WTC11 (cell line): ENCODE measurements at regions of chr11 and their contacts with region 1.

Region 1: DNA sequence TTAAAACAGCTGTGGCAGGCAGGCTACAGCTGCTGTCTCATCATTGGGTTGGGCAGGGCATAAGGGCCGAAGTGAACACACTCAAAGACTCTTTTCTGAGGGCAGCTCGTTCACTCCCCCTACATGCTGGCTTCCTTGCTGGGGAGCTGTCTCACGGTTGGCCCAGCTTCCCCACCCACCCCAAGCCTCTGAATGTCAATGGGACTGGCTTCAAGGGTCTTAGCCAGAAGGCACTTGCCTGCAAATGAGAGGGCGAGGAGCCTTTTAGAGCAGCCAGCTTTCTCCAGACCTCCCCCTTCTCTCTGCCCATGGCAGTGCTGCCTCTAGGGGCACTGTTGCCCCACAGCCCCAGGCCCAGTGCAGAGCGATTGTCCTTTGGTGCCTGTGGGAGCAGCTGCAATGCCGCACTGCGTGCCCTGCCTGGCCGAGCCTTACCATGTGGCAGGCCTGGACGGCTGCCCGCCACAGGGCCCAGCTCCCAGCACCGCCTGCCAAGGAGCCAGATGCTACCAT is 94.7 kb upstream of the RASSF10 start:
- DNase-seq: peak; percentile 88
- ATAC-seq: peak; percentile 98
- H3K4me3 Mint-ChIP-seq: peak overlapping the region; percentile 55
- H3K27ac Mint-ChIP-seq: peak overlapping the region; percentile 99
- H3K4me1 Mint-ChIP-seq: peaks cover 59% of the 10 kb centered on the region
- H3K27me3 Mint-ChIP-seq: no peaks in the 10 kb centered on the region
- CTCF ChIP-seq: peak; percentile 62

Region 2: DNA sequence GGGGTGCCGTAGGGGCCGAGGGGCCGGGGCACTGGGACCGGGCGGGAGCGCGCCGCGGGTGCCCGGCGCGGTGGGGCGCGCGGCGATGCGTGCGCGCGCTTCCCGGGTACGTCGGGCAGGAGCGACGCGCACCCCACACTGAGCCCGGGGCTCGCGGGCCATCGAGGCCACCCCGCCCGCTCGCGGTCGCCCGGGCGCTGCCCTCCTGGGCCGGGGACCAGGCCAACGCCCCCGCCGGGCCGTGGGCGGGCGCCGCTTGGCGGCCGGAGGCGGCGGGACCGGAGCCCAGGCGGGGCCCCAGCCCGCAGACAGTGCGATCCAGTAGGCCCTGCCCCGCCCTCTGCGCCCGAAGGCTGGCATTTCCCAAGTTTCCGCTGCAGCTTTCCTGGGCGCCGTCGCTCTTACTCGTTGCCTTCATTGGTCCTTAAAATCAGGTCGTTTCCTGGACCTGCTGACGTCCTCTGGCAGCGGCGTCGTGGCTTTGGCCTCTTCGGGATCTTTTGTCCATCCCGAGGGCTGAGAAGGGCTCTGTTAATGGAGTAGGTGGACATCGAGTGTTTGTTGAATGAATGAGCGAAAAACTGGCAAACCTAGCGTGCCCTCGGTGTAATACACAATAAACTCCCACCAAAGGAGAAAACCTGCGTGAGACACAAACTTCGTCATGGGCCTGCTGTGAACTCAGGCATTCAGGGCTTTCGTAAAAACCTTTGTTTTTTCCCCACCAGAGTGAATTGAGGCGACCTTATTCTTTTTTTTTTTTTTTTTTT is 536.4 kb before region 1 on chr11:
- CTCF ChIA-PET with region 1: interaction called, 12 read pairs
- POLR2A ChIA-PET with region 1: no interaction called
- DNase-seq: peak; percentile 82
- ATAC-seq: peak; percentile 82
- H3K4me3 Mint-ChIP-seq: peak overlapping the region; percentile 94
- H3K27ac Mint-ChIP-seq: peak overlapping the region; percentile 100
- H3K4me1 Mint-ChIP-seq: peaks cover 23% of the 10 kb centered on the region
- H3K27me3 Mint-ChIP-seq: peaks cover 29% of the 10 kb centered on the region
- CTCF ChIP-seq: no peak

Region 3: GRCh38 chr11:12876340-12876739 is 38.1 kb before region 1 on chr11:
- CTCF ChIA-PET with region 1: interaction called, 10 read pairs
- POLR2A ChIA-PET with region 1: no interaction called
- DNase-seq: no peak
- ATAC-seq: no peak
- H3K4me3 Mint-ChIP-seq: no peak overlapping the region
- H3K27ac Mint-ChIP-seq: no peak overlapping the region
- H3K4me1 Mint-ChIP-seq: peaks cover 40% of the 10 kb centered on the region
- H3K27me3 Mint-ChIP-seq: no peaks in the 10 kb centered on the region
- CTCF ChIP-seq: no peak

Region 4: GRCh38 chr11:12900496-12900895 is 14.0 kb before region 1 on chr11:
- CTCF ChIA-PET with region 1: interaction called, 43 read pairs
- POLR2A ChIA-PET with region 1: interaction called, 5 read pairs
- DNase-seq: no peak
- ATAC-seq: no peak
- H3K4me3 Mint-ChIP-seq: no peak overlapping the region
- H3K27ac Mint-ChIP-seq: no peak overlapping the region
- H3K4me1 Mint-ChIP-seq: peaks cover 17% of the 10 kb centered on the region
- H3K27me3 Mint-ChIP-seq: no peaks in the 10 kb centered on the region
- CTCF ChIP-seq: no peak

Region 5: DNA sequence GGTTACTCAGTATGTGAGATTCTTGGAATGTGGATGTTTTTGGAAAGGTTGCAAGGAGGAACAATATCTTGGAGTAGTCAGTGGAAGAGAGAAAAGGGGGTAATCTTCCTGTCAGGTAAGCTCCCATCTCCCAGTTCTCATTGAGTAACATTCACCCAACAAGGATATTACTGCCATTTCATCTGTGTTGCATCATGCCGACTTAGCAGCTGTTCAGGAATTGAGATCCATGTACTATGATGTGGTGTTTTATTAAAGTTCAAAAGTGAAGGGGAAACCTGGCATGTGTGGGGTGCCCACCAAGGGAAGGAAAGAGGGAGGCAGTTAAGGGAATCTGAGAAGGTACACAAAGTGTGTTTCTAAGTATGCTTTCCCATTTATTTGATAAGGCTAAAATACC is 36.2 kb after region 1 on chr11:
- CTCF ChIA-PET with region 1: interaction called, 15 read pairs
- POLR2A ChIA-PET with region 1: no interaction called
- DNase-seq: no peak
- ATAC-seq: no peak
- H3K4me3 Mint-ChIP-seq: no peak overlapping the region
- H3K27ac Mint-ChIP-seq: no peak overlapping the region
- H3K4me1 Mint-ChIP-seq: peaks cover 3% of the 10 kb centered on the region
- H3K27me3 Mint-ChIP-seq: no peaks in the 10 kb centered on the region; the same call in 1 of the 2 replicates
- CTCF ChIP-seq: no peak

Region 6: GRCh38 chr11:13008625-13009475 is 94.4 kb after region 1 on chr11 and contains the start of gene RASSF10:
- CTCF ChIA-PET with region 1: interaction called, 36 read pairs
- POLR2A ChIA-PET with region 1: interaction called, 4 read pairs
- DNase-seq: peak; percentile 95
- ATAC-seq: peak; percentile 87
- H3K4me3 Mint-ChIP-seq: peak within 1 kb of the TSS; percentile 81
- H3K27ac Mint-ChIP-seq: peak within 1 kb of the TSS; percentile 96
- H3K4me1 Mint-ChIP-seq: peaks cover 55% of the 10 kb centered on the region
- H3K27me3 Mint-ChIP-seq: peaks cover 63% of the 10 kb centered on the region
- CTCF ChIP-seq: no peak
- total RNA-seq, gene RASSF10: 2.6 to 3.2 TPM (median 2.9 TPM) in 3 replicates

Region 7: DNA sequence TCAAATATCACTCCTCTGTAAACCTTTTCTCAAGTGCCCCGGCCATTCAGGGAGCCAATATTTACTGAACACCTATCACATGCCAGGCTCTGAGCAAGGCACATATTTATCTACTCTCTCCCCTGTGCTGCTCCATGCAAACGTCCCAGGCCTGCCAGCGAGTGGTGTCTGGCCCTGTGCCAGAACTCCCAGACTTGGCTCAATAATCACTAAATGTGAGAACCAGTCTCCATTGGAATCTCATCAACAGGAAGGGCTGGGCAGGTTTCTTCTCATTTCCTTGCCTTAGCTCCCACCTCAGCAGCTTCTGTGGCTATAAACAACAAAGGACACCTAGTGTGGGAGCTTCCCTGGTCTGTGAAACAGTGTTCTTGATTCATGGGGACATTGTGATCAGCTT is 116.4 kb after region 1 on chr11:
- CTCF ChIA-PET with region 1: no interaction called
- POLR2A ChIA-PET with region 1: no interaction called
- DNase-seq: no peak
- ATAC-seq: no peak
- H3K4me3 Mint-ChIP-seq: no peak overlapping the region
- H3K27ac Mint-ChIP-seq: no peak overlapping the region
- H3K4me1 Mint-ChIP-seq: no peaks in the 10 kb centered on the region
- H3K27me3 Mint-ChIP-seq: no peaks in the 10 kb centered on the region
- CTCF ChIP-seq: no peak